ENCODE measurements at regions of chr1 and their contacts with region 1.

Region 1: DNA sequence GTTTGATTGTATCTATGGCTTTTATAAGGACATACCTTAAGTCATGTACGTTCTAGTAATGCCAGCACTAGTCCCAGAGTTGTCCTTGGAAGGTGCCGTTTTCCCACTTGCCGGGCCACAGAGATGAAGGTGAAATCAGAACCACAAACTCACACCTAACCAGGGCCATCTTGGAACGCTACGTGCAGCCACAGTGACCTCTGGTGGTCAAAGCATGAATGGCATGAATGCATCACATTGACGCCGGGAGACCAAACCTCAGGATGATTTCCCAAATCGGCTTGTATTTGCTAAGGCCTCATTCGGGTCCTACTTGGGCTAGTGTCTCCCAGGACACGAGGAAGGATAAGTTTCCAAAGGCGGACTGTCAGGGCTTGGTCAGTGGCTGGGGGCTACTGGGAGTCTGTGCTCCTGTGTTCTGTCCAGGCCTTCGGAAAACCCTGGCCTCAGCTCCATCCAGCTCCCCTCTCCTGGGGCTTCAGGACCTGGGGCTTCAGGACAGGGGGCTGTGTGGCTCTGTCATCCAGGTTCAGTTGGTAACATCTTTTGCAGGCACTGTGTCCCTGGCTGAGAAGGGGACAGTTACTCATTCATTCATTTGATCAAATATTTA is 260.5 kb downstream of the PRDM2 start:
- DNase-seq: peak; percentile 48 to 94 (median 79)

Region 2: DNA sequence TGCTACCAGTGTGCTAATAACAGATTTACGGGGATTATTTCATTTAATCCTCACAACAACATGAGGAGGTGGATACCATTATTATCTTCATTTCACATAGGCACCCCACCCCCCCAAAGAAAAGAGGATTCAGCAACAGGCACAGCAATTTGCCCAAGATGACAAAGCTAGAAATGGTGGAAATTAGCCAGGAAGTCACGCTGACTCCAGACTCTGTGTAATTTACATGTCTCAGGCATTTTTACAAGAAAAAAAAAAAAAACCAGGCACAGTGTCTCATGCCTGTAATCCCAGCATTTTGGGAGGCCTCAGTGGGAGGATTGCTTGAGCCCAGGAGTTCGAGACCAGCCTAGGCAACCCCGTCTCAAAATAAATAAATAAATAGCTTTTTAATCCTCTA is 298.0 kb before region 1 on chr1:
- intact Hi-C with region 1: loop called (anchors 1 kb)
- DNase-seq: no peak

Region 3: DNA sequence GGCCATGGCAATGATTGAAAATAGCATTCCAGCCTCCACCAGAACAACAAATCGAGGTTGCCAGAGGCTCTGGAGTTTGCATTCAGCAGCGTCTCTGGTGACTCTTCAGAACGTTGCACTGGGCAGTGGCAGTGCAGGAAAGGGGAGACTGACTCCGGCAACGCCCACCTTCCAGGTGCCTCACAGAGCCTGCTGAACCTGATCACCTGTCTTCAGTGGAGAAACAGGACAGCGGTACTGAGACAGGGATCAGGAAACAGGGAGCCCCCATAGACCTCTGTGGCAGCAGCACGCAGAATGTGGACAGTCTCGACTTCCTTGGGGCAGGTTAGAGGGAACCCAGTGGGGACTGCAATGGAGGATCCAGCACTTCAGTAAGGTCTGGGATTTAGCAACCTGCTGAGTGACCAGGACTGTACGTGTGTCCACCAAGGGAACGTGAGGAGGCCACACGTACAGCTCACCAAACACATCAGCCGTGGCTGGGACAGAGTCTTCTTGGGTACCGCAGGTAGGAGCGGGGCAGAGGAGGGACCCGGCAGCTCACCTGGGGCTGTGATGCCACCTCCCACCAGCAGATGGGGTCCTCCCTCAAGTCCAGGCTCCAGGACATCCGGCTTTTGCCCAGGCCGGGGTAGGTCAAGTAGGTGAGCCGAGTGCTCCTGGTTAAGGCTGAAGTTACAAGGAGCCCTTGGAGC is 131.9 kb before region 1 on chr1:
- intact Hi-C with region 1: loop called (anchors 10 kb)
- DNase-seq: peak in 1 of 10 donors; percentile 89

Region 4: DNA sequence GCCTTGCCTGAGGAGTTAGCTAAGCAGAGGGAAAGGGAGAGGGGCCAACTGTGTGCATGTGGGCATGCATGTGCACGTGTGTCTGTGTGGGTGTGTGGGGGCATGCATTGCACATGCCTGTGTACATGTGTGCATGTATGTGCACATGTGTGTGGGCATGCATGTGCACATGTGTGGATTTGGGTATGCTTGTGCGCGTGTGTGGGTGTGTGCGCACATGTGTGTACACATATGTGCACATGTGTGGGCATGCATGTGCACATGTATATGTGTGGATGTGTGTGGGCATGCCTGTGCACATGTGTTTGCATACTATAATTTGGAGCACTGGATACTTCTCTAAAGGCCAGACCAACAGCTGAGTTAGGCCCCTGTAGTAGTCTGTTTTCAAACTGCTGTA is 89.5 kb after region 1 on chr1:
- intact Hi-C with region 1: no loop called
- DNase-seq: no peak

Region 5: DNA sequence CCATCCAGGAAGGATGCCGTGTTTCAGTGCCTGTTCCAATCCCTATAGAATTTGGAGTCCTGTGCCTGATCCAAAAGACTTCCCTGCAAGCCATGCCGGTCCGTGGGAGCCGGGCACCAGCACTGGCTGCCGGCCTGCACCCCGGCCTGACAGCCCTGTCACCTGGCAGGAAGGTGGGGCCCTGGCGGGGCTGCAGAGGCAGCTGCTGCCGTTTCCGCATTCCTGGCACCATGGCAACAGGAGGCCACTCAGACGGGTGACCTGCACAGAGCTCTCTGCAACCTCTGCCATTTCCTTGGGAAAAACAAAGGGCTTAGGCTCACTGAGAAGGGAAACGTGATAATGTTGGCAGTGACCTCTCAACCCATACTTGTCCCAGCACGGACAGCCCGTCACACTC is 1129.9 kb after region 1 on chr1:
- intact Hi-C with region 1: loop called (anchors 10 kb)
- DNase-seq: peak in 2 of 10 donors; percentile 49 to 76